ENCODE measurements at regions of chr2 and their contacts with region 1.

Region 1: DNA sequence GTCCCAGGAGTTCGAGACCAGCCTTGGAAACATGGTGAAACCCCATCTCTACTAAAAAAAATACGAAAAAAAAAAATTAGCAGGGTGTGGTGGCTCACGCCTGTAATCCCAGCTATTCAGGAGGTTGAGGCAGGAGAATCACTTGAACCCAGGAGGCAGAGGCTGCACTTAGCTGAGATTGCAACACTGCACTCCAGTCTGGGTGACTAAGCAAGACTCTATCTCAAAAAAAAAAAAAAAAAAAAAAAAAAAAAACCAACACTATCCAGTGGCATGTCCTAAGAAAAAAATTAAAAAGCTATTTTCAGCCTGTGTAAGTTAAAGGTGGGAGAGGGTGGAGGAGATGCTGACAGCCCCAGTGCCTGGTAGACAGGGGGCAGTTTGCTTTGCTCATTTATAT is 32.2 kb upstream of the REL start:
- DNase-seq: no peak
- H3K4me3 ChIP-seq: no peak overlapping the region
- H3K27ac ChIP-seq: no peak overlapping the region
- H3K4me1 ChIP-seq: no peaks in the 10 kb centered on the region
- H3K27me3 ChIP-seq: no peaks in the 10 kb centered on the region
- CTCF ChIP-seq: no peak

Region 2: GRCh38 chr2:60725466-60725865 is 123.7 kb before region 1 on chr2:
- intact Hi-C with region 1: no loop called
- DNase-seq: no peak
- H3K4me3 ChIP-seq: no peak overlapping the region
- H3K27ac ChIP-seq: no peak overlapping the region
- H3K4me1 ChIP-seq: no peaks in the 10 kb centered on the region
- H3K27me3 ChIP-seq: no peaks in the 10 kb centered on the region
- CTCF ChIP-seq: no peak

Region 3: GRCh38 chr2:60899230-60899891 is 50.2 kb after region 1 on chr2:
- intact Hi-C with region 1: loop called (anchors 5 kb)
- DNase-seq: no peak
- H3K4me3 ChIP-seq: no peak overlapping the region
- H3K27ac ChIP-seq: no peak overlapping the region
- H3K4me1 ChIP-seq: no peaks in the 10 kb centered on the region
- H3K27me3 ChIP-seq: no peaks in the 10 kb centered on the region
- CTCF ChIP-seq: no peak

Region 4: DNA sequence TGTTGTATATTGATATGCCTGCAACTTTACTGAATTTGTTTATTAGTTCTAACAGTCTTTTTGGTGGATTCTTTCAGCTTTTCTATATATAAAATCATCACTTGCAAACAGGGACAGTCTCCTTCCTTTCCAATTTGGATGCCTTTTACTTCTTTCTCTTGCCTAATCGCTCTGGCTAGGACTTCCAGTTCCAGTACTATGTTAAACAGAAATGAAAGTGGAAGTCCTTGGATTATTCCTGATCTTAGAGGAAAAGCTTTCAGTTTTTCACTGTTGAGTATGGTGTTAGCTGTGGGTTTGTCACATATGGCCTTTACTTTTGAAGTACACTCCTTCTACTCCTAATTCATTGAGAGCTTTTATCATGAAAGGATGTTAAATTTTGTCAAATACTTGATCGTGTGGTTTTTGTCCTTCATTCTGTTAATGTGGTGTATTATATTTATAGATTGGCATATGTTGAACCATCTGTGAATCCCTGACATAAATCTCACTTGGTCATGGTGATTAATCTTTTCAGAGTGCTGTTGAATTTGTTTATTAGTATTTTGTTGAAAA is 85.1 kb after region 1 on chr2:
- intact Hi-C with region 1: no loop called
- DNase-seq: no peak
- H3K4me3 ChIP-seq: no peak overlapping the region
- H3K27ac ChIP-seq: no peak overlapping the region
- H3K4me1 ChIP-seq: no peaks in the 10 kb centered on the region
- H3K27me3 ChIP-seq: no peaks in the 10 kb centered on the region
- CTCF ChIP-seq: no peak